IMR-90 (cell line): ENCODE measurements at regions of chr4 and their contacts with region 1.

Region 1: GRCh38 chr4:8459867-8460447 is 19.4 kb downstream of the TRMT44 start:
- DNase-seq: no peak
- ATAC-seq: peak; percentile 83
- H3K4me3 ChIP-seq: no peak overlapping the region
- H3K27ac ChIP-seq: no peak overlapping the region
- H3K4me1 ChIP-seq: no peaks in the 10 kb centered on the region
- H3K27me3 ChIP-seq: no peaks in the 10 kb centered on the region
- CTCF ChIP-seq: no peak
- POLR2A ChIP-seq: no peak
- RAD21 ChIP-seq: no peak

Region 2: GRCh38 chr4:8537041-8537552 is 77.1 kb after region 1 on chr4:
- CTCF ChIA-PET with region 1: no interaction called
- POLR2A ChIA-PET with region 1: no interaction called
- dilution Hi-C with region 1: no loop called
- in situ Hi-C with region 1: no loop called
- intact Hi-C with region 1: no loop called
- DNase-seq: peak; percentile 90
- ATAC-seq: peak; percentile 67
- H3K4me3 ChIP-seq: no peak overlapping the region
- H3K27ac ChIP-seq: peak overlapping the region; percentile 3; the same call in 1 of the 2 replicates
- H3K4me1 ChIP-seq: peaks cover 8% of the 10 kb centered on the region; the same call in 1 of the 2 replicates
- H3K27me3 ChIP-seq: no peaks in the 10 kb centered on the region; the same call in 1 of the 2 replicates
- CTCF ChIP-seq: no peak
- POLR2A ChIP-seq: no peak
- RAD21 ChIP-seq: no peak

Region 3: GRCh38 chr4:8594097-8595038 is 134.4 kb after region 1 on chr4:
- CTCF ChIA-PET with region 1: no interaction called
- POLR2A ChIA-PET with region 1: no interaction called
- dilution Hi-C with region 1: no loop called
- in situ Hi-C with region 1: loop called (anchors 5 kb)
- intact Hi-C with region 1: no loop called
- DNase-seq: peak; percentile 72
- ATAC-seq: peak; percentile 53
- H3K4me3 ChIP-seq: no peak overlapping the region; the same call in 1 of the 2 replicates
- H3K27ac ChIP-seq: no peak overlapping the region
- H3K4me1 ChIP-seq: peaks cover 10% of the 10 kb centered on the region; the same call in 1 of the 2 replicates
- H3K27me3 ChIP-seq: peaks cover 34% of the 10 kb centered on the region
- CTCF ChIP-seq: peak; percentile 84
- POLR2A ChIP-seq: no peak
- RAD21 ChIP-seq: peak; percentile 89